ENCODE measurements at regions of chr5 and their contacts with region 1.

Region 1: DNA sequence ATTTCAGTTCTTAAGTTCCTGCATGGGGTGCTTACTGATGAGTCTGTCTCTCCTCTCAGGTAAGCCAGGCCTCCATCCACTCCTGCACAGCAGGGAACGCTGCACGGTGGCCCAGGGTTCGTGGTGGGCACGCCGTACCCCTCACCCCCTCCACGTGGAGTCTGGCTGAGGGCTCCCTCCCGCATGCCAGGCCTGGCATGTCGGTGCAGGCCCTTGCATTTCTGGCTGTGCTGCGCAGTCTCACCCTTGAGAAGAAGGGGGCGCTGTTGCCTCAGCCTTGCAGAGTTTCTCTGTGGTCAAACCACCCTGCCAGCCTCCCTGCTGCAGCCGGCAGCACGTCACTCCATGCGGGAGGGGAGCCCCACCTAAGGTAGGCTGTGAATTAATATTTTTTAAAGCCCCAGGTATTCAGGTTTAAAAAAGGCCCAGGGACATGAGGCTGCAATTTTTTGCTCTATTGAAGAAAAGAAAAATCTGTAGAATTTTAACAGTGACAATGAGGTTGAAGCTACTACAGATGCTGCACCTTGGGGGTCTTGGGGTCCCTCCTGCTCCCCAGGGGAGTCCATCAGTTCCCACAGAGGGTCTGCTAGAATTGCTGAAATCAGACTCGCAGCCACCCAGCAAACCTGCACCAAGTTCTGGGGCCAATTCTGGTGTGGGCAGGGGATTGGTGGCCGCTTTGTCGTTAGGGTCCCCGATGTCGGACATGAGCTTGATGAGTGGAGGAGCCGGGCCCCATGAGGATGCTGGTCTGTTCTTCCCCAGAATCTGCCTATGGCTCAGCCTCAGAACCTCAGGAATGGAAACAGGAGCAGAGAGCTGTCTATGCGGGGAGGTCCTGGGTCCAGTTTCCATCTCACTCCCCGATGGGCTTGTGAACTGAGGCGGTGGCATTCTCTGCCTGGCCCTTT is 52.6 kb downstream of the TENT4A start:
- DNase-seq: peak; percentile 88
- ATAC-seq: peak; percentile 86
- H3K4me3 Mint-ChIP-seq: no peak overlapping the region
- H3K27ac Mint-ChIP-seq: no peak overlapping the region
- H3K4me1 Mint-ChIP-seq: peaks cover 9% of the 10 kb centered on the region
- H3K27me3 Mint-ChIP-seq: no peaks in the 10 kb centered on the region

Region 2: DNA sequence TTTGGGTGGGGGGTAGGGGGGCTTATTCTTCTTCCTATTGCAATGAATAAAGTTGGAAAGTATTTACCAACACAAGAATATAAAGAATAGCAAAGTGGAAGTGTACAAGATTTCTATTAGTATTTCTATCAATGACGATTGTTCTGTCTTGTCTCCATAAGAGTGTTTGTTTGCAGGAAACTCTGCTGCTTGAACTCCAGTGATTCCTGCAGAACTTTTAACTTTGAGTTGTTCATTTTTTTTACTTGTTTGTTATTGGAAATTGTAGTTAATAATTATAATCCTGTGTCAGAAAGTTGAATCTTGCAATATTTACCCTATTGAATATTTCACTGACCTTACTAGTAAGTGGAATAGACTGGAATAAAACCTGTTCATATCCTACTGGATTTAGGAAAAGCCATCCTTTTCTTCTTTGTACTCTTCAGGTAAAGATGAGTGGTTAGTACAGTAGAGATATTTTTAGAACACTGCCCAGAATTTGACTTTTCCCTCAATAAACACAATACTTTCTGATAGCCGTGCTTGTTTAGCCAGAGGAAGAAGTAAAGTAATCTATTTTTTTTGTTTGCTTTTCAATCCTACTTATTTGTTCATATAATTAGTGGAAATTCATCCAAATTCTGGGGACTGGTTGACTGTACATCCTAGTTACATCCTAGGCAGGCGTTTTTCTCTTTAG is 287.8 kb after region 1 on chr5:
- CTCF ChIA-PET with region 1: no interaction called
- POLR2A ChIA-PET with region 1: no interaction called
- intact Hi-C with region 1: no loop called
- DNase-seq: no peak
- ATAC-seq: no peak
- H3K4me3 Mint-ChIP-seq: no peak overlapping the region
- H3K27ac Mint-ChIP-seq: no peak overlapping the region
- H3K4me1 Mint-ChIP-seq: no peaks in the 10 kb centered on the region
- H3K27me3 Mint-ChIP-seq: peaks cover 4% of the 10 kb centered on the region

Region 3: DNA sequence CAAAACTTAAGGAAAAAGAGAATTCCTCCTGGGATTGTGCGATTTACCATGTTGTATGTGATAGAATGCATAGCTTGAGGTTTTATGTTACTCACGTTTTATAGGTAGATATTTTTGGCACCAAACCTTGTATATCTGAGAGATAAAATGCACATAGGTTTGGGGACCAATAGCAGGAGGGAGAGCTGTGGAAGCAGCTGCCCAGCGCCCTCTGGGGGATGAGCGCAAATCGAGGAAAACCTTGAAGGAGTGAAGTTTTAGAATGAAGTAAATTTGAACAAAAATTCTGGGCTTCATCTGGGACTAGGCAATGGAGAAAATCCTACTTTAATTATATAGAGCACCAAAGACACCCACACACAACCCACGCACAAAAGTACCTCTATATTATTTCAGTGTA is 827.0 kb after region 1 on chr5:
- CTCF ChIA-PET with region 1: no interaction called
- POLR2A ChIA-PET with region 1: no interaction called
- intact Hi-C with region 1: loop called in 1 of 2 experiments (anchors 5 kb)
- DNase-seq: peak; percentile 23
- ATAC-seq: no peak
- H3K4me3 Mint-ChIP-seq: no peak overlapping the region
- H3K27ac Mint-ChIP-seq: no peak overlapping the region
- H3K4me1 Mint-ChIP-seq: no peaks in the 10 kb centered on the region
- H3K27me3 Mint-ChIP-seq: no peaks in the 10 kb centered on the region

Region 4: GRCh38 chr5:7745882-7746610 is 980.2 kb after region 1 on chr5:
- CTCF ChIA-PET with region 1: interaction called, 3 read pairs
- POLR2A ChIA-PET with region 1: no interaction called
- intact Hi-C with region 1: loop called in 1 of 2 experiments (anchors 2 kb)
- DNase-seq: peak; percentile 69
- ATAC-seq: no peak
- H3K4me3 Mint-ChIP-seq: no peak overlapping the region
- H3K27ac Mint-ChIP-seq: no peak overlapping the region
- H3K4me1 Mint-ChIP-seq: no peaks in the 10 kb centered on the region
- H3K27me3 Mint-ChIP-seq: peaks cover 8% of the 10 kb centered on the region

Region 5: DNA sequence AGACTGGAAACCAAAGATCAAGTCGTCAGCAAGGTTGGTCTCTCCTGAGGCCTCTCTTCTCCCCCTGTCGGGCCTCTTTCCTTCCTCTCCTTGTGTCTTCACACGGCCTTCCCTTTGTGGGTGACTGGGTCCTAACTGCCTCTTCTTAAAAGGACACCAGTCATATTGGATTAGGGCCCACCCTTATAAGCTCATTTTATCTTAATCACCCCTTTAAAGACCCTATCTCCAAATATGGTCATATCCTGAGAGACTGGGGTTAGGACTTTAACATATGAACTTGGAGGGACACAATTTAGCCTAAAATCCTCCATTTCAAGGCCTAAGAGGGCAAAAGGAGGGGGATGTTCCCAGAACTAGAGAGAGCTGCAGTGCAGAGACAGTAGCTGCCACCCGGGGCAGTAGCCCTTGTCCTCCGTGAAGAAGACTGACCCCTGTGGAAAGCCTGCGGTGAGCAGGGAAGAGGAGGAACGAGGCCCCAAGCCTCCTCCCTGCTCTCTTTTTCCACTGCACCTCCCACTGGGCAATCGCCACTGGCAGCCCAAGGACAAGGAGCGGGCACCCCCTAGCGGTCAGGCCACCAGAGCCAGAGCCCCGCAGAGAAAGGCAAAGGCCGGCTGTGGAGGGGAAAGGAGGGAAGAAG is 1050.1 kb after region 1 on chr5:
- CTCF ChIA-PET with region 1: no interaction called
- POLR2A ChIA-PET with region 1: no interaction called
- intact Hi-C with region 1: loop called in 1 of 2 experiments (anchors 1 kb)
- DNase-seq: peak; percentile 83
- ATAC-seq: peak; percentile 76
- H3K4me3 Mint-ChIP-seq: no peak overlapping the region
- H3K27ac Mint-ChIP-seq: no peak overlapping the region
- H3K4me1 Mint-ChIP-seq: no peaks in the 10 kb centered on the region
- H3K27me3 Mint-ChIP-seq: peaks cover 32% of the 10 kb centered on the region

Region 6: GRCh38 chr5:7856855-7857254 is 1091.0 kb after region 1 on chr5:
- CTCF ChIA-PET with region 1: interaction called, 4 read pairs
- POLR2A ChIA-PET with region 1: no interaction called
- intact Hi-C with region 1: loop called in 1 of 2 experiments (anchors 5 kb)
- DNase-seq: peak; percentile 57
- ATAC-seq: peak; percentile 71
- H3K4me3 Mint-ChIP-seq: no peak overlapping the region
- H3K27ac Mint-ChIP-seq: no peak overlapping the region
- H3K4me1 Mint-ChIP-seq: peaks cover 26% of the 10 kb centered on the region
- H3K27me3 Mint-ChIP-seq: no peaks in the 10 kb centered on the region